GM10248 (cell line): ENCODE measurements at regions of chr17 and their contacts with region 1.

Region 1: GRCh38 chr17:81870117-81870977 is 790 bp downstream of the ARHGDIA start:
- DNase-seq: no peak
- CTCF ChIP-seq: no peak

Region 2: DNA sequence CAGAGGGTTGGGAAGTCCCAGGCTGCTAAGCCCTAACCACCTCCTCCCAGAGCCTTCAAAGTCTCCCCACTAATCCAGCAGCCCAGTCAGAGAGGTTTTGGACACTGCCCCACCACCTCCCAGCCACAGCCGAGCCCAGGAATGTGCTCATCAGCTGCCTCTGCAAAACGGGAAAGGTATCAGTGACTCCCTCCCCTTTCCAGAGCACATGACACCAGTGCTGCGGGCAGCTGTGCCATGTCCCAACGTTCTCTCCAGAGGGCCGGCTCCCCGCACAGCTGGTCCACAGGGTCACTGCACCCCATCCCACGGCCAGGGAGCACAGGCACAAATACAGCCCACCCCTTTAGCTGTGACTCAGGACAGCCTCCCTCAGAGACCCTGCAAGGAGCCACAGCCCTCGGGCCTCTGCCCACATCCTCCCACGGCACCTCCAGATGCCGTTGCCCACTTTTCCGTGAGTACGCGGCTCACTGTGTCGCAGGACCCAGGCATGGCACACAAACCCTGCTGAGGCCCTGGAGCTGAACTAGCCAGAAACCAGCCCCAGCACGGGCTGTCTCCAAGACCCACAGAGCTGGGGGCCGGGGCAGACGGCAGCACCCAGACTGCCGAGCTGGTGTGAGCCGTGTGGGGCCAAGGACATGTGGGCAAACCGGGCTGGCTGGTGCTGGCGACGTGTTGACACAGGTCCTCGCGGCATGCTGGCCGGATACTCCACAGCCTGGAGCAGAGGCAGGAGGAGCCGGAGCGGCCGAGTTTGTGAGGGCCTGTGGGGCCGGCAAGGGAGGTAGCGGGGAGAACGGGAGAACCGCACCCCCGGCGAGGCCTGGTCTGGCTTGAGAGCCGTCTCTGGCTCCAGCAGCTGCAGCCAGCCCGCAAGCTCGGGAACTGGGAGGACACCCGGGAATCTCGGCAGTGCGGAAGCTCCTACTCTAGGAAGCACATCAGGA is 29.2 kb before region 1 on chr17:
- CTCF ChIA-PET with region 1: no interaction called
- POLR2A ChIA-PET with region 1: no interaction called
- DNase-seq: no peak
- CTCF ChIP-seq: no peak

Region 3: DNA sequence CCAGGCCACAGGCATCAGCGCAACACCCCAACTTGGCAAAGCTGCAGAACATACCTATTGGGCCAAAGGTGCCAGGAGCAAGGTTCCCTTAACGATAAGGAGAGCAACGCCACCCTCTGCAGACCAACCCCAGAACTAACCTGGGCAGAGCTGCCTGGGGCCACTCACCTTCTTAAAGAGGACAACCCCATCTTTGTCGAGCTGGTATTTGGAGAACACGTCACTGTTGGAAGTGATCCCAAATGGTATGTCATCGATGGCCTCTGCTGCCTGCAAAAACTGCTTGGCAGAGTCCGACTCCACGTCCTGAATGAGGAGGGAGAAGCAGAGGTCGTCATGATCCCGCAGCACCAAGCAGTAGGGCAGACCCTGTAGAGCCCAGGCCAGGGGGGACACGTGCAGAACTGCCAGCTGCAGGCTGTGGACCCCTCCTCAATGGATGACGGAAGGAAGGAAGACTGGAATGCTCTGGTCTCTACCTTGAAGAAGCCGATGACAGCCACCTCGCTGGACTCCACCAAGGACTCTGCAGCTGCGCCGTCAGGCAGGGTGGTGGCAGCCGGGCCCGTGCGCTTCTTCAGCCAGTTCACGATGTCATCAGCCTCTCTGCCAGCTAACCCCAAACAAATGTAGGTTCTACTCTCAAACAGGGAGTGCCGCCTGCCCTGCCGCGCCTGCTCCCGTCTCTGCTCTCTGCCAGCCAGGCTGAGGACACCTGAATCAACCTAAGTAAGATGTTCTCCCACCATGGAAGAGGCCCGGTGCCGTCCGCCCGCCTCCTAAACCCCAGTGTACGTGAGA is 15.2 kb before region 1 on chr17:
- CTCF ChIA-PET with region 1: interaction called, 10 read pairs
- POLR2A ChIA-PET with region 1: interaction called, 21 read pairs
- DNase-seq: no peak
- CTCF ChIP-seq: no peak

Region 4: DNA sequence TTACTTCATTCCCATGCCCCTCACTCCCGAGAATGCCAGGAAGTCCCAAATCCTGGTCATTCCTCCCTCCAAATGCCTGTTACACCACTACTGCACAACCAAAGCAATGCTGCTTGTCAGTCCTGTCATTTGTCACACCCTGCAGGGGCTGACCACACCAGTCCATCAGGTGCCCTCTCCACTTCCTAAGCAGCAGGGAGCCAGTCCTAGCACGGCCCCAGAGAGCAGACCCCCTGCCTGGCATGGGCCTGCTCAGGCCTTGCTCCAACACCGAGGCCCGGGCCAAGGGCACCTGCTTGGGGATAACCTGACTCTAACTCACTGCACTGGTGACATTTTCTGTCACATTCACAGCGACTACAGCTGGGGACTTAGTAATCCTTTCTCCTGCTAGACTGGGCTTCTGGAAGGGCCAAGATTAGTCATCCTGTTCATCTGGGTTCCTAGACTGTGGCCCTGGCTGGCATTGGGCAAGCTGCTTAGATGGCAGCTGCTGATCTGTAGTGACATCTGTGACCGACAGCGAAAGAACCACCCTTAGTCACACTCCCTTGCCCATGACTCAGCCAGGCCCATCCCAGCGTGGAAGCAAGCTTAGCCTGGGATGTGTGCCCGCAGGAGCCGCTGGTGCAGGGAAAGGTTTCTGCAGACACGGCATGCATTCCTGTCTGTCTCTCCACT is 15.7 kb after region 1 on chr17:
- CTCF ChIA-PET with region 1: interaction called, 10 read pairs
- POLR2A ChIA-PET with region 1: interaction called, 5 read pairs
- DNase-seq: no peak
- CTCF ChIP-seq: no peak

Region 5: GRCh38 chr17:81911277-81911961 is 41.1 kb after region 1 on chr17 and contains the start of gene PCYT2:
- CTCF ChIA-PET with region 1: no interaction called
- POLR2A ChIA-PET with region 1: no interaction called
- DNase-seq: peak; percentile 100
- CTCF ChIP-seq: no peak